PC-3 (cell line): ENCODE measurements at regions of chr2 and their contacts with region 1.

Region 1: DNA sequence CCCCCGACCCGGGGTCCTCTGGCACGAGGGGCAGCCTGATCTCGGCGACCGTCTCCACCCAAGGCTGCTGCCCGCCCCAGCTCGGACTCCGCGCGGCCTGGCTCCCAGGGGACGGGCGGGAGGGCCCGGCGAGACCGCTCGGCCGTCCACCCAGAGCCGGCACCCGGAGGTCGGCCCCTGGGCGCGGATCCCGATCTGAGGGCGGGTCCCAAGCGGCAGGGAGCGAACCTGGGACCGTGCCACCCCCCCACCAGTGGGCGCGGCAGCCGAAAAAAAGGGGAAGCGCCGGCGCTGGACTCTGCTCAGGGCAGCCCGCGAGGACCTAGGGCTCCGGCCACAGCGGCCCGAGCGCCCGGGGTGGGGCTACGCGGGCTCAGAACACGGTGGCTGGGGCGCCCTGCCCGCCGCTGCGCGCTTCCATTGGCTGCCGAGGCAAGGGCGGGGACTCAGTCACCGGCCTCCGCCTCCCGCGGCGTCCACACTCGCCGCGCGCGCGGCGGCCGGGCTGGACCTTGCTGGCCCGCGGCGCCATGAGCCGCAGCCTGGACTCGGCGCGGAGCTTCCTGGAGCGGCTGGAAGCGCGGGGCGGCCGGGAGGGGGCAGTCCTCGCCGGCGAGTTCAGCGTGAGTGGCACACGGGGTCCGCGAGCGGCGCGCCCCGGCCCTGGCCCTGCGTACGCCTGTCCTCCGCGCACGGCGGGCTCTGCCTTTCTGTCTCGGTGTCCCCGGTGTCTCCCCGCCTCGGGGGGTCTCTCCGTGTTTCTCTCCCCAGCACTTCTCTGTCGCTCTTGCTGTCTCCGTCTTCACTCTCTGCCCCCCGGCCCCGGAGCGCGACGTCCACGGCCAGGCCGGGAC is at the start of gene PTPN18:
- DNase-seq: peak; percentile 86
- ATAC-seq: peak; percentile 95
- H3K4me3 ChIP-seq: peak within 1 kb of the TSS; percentile 73
- H3K27ac ChIP-seq: no peak within 1 kb of the TSS
- H3K4me1 ChIP-seq: peaks cover 4% of the 10 kb centered on the region; the same call in 1 of the 2 replicates
- H3K27me3 ChIP-seq: no peaks in the 10 kb centered on the region
- CTCF ChIP-seq: peak; percentile 46; the same call in 1 of the 2 replicates
- total RNA-seq, gene PTPN18: 27.1 and 33.5 TPM in 2 replicates

Region 2: DNA sequence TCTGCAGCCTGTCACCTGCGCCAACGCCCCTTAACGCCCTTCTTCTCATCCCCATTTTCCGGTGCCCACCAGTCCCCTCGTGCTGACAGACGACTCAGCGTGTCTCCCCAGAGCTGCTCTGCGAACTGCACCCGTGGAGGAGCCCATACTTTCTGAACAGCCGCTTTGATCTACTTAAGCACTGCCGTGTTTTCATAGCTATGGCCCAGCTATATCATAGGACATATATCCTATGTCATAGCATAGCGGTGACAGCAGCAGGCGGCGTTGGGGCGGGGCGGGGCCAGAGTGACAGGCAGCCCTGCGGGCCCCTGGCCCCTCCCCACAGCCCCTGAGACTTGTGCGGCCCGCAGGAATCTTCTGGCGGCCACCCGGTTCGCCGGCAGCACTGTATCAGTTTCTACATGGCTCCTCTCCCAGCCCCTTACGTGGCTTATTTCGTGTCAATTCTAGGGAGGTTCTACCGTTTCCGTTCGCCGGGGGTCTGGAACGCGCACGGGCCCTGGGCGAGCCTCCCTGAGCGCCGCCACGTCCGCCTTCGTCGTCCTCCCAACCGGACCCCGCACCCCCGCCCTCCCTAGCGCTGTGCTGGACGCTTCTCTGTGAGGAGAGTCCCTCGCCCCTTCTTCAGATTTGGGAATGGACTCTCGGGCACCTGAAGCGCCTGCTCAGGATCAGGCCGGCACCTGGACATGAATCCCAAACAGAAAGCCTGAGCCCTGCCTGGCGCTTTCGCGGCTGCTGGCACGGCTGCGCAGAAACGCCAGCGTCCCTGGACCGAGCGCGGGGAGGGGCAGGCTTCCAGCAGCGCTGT is 35.5 kb after region 1 on chr2:
- CTCF ChIA-PET with region 1: no interaction called
- POLR2A ChIA-PET with region 1: no interaction called
- intact Hi-C with region 1: loop called (anchors 1 kb)
- DNase-seq: peak; percentile 74
- ATAC-seq: peak; percentile 95
- H3K4me3 ChIP-seq: peak overlapping the region; percentile 78
- H3K27ac ChIP-seq: no peak overlapping the region
- H3K4me1 ChIP-seq: peaks cover 11% of the 10 kb centered on the region
- H3K27me3 ChIP-seq: no peaks in the 10 kb centered on the region
- CTCF ChIP-seq: no peak